ENCODE measurements at regions of chr17 and their contacts with region 1.

Region 1: GRCh38 chr17:64020056-64020766 is at the start of gene ICAM2:
- DNase-seq: peak; percentile 98 to 99 (median 99)
- H3K4me3 ChIP-seq: peak within 1 kb of the TSS; percentile 3 to 76 (median 72)
- H3K27ac ChIP-seq: peak within 1 kb of the TSS; percentile 96 to 99
- H3K4me1 ChIP-seq: peaks cover 32 to 95% (median 80%) of the 10 kb centered on the region in 4 experiments
- H3K27me3 ChIP-seq: no peaks in the 10 kb centered on the region

Region 2: GRCh38 chr17:63998050-63998720 is 22.0 kb before region 1 on chr17 and contains the start of gene PRR29:
- CTCF ChIA-PET with region 1: interaction called, 230 read pairs
- POLR2A ChIA-PET with region 1: interaction called, 7 read pairs
- DNase-seq: peak; percentile 65 to 73 (median 71)
- H3K4me3 ChIP-seq: peak within 1 kb of the TSS; percentile 54 to 90 (median 80)
- H3K27ac ChIP-seq: no peak within 1 kb of the TSS
- H3K4me1 ChIP-seq: peaks cover 0 to 35% (median 21%) of the 10 kb centered on the region in 4 experiments
- H3K27me3 ChIP-seq: no peaks in the 10 kb centered on the region

Region 3: GRCh38 chr17:64005734-64006167 is 14.5 kb before region 1 on chr17:
- CTCF ChIA-PET with region 1: interaction called, 230 read pairs
- POLR2A ChIA-PET with region 1: interaction called, 31 read pairs
- DNase-seq: peak in 2 of 3 donors; percentile 60 to 69
- H3K4me3 ChIP-seq: peak overlapping the region in 3 of 7 experiments; percentile 11 to 51 (median 12)
- H3K27ac ChIP-seq: peak overlapping the region; percentile 42 to 80
- H3K4me1 ChIP-seq: peaks cover 0 to 51% (median 45%) of the 10 kb centered on the region in 4 experiments
- H3K27me3 ChIP-seq: no peaks in the 10 kb centered on the region

Region 4: DNA sequence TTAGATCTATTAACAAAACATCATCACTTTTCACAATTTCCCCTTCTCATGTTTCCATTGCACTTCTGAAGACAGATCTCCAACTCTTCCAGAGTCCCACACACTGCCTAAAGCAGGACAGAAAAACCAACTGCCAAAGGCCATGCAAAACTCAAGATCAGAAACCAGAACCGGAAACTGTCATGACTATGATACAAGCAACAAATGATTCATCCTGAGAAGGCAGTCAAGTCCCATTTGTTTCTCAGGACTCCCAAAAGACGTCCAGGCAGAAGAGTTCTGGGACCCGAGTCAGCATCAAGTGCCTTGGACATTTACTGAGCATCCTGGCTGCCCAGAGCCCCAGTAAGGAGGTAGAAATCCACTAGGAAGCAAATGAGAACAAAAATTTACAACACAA is 70.9 kb after region 1 on chr17:
- CTCF ChIA-PET with region 1: no interaction called
- POLR2A ChIA-PET with region 1: no interaction called
- DNase-seq: no peak
- H3K4me3 ChIP-seq: no peak overlapping the region
- H3K27ac ChIP-seq: no peak overlapping the region
- H3K4me1 ChIP-seq: peaks cover 6 to 13% (median 9%) of the 10 kb centered on the region in 4 experiments
- H3K27me3 ChIP-seq: no peaks in the 10 kb centered on the region

Measured in common myeloid progenitor, CD34-positive (primary cell).